SK-MEL-5 (cell line): ENCODE measurements at regions of chr14 and their contacts with region 1.

Region 1: GRCh38 chr14:102993529-102993928 is 63.8 kb downstream of the CDC42BPB start:
- DNase-seq: no peak

Region 2: GRCh38 chr14:102655170-102655569 is 338.4 kb before region 1 on chr14:
- in situ Hi-C with region 1: loop called (anchors 25 kb)
- DNase-seq: no peak